PC-9 (cell line): ENCODE measurements at regions of chr3 and their contacts with region 1.

Region 1: GRCh38 chr3:112582244-112582874 is 20.5 kb downstream of the SLC35A5 start:
- DNase-seq: peak; percentile 47 to 55
- H3K4me3 ChIP-seq: no peak overlapping the region
- H3K27ac ChIP-seq: no peak overlapping the region
- H3K4me1 ChIP-seq: no peaks in the 10 kb centered on the region
- H3K27me3 ChIP-seq: no peaks in the 10 kb centered on the region
- CTCF ChIP-seq: peak; percentile 83

Region 2: GRCh38 chr3:112074006-112074405 is 508.4 kb before region 1 on chr3:
- CTCF ChIA-PET with region 1: no interaction called
- POLR2A ChIA-PET with region 1: no interaction called
- intact Hi-C with region 1: no loop called
- DNase-seq: peak in 1 of 2 experiments; percentile 63
- H3K4me3 ChIP-seq: peak overlapping the region; percentile 12; the same call in 1 of the 2 replicates
- H3K27ac ChIP-seq: peak overlapping the region; percentile 78
- H3K4me1 ChIP-seq: peaks cover 28% of the 10 kb centered on the region
- H3K27me3 ChIP-seq: no peaks in the 10 kb centered on the region
- CTCF ChIP-seq: no peak

Region 3: DNA sequence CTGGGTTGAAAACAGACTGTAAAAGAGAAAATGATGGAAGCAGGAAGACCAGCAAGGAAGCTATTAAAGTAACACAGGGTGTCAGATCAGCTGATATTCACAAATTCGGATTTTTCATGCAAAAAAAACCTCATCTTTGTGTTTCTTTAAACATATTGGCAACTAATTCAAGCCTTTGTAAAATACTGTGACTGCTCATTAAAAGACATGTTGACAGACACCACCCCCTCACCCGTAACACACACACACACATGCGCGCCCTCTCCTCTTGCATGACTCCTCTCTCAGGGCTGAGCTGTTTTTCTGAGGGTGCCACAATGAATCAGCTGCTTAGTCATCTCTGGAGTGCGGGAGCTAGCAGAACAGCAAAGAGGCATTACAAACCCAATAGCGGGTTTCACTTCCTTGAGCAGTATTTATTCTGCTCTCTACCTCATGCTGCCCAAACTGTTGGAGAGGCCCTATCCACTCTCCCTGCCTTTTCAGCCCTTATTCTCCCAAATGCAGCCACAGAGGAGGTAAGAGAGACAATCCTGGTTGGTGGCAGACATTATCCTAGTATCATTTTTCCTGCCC is 94.4 kb after region 1 on chr3:
- CTCF ChIA-PET with region 1: no interaction called
- POLR2A ChIA-PET with region 1: no interaction called
- intact Hi-C with region 1: loop called (anchors 1 kb)
- DNase-seq: peak; percentile 53 to 86
- H3K4me3 ChIP-seq: no peak overlapping the region
- H3K27ac ChIP-seq: peak overlapping the region; percentile 87
- H3K4me1 ChIP-seq: peaks cover 57% of the 10 kb centered on the region
- H3K27me3 ChIP-seq: no peaks in the 10 kb centered on the region
- CTCF ChIP-seq: no peak

Region 4: GRCh38 chr3:112734718-112735350 is 152.5 kb after region 1 on chr3:
- CTCF ChIA-PET with region 1: no interaction called
- POLR2A ChIA-PET with region 1: no interaction called
- intact Hi-C with region 1: loop called (anchors 1 kb)
- DNase-seq: peak; percentile 44 to 63
- H3K4me3 ChIP-seq: no peak overlapping the region
- H3K27ac ChIP-seq: no peak overlapping the region
- H3K4me1 ChIP-seq: peaks cover 58% of the 10 kb centered on the region
- H3K27me3 ChIP-seq: no peaks in the 10 kb centered on the region
- CTCF ChIP-seq: peak; percentile 86

Region 5: GRCh38 chr3:112990672-112991602 is 408.6 kb after region 1 on chr3 and contains the start of gene GTPBP8:
- CTCF ChIA-PET with region 1: no interaction called
- POLR2A ChIA-PET with region 1: no interaction called
- intact Hi-C with region 1: loop called (anchors 5 kb)
- DNase-seq: peak; percentile 87 to 90
- H3K4me3 ChIP-seq: peak within 1 kb of the TSS; percentile 95
- H3K27ac ChIP-seq: peak within 1 kb of the TSS; percentile 98
- H3K4me1 ChIP-seq: peaks cover 29% of the 10 kb centered on the region
- H3K27me3 ChIP-seq: no peaks in the 10 kb centered on the region
- CTCF ChIP-seq: peak; percentile 25; the same call in 1 of the 2 replicates
- total RNA-seq, gene GTPBP8: 27.9 and 34.3 TPM in 2 replicates

Region 6: DNA sequence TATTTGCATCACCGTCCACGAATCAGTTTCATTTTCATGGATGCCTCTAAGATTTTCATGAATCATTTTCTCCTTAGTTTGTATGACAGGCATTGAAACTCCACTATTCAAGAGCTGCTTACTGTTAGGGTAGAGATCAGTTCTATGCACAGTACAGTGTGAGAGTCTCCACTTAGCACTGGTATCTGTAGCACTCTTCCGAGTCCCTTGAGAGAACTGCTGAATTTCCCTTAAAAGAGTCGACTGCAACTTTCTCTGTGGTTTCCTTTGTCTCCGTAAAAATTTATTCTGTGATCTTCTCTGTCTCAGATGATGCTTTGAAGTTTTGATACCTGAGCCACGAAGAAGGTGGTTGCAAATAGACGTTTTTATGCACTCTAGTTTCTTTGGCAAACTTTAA is 423.3 kb after region 1 on chr3:
- CTCF ChIA-PET with region 1: no interaction called
- POLR2A ChIA-PET with region 1: interaction called, 13 read pairs
- intact Hi-C with region 1: no loop called
- DNase-seq: no peak
- H3K4me3 ChIP-seq: no peak overlapping the region
- H3K27ac ChIP-seq: no peak overlapping the region
- H3K4me1 ChIP-seq: no peaks in the 10 kb centered on the region
- H3K27me3 ChIP-seq: no peaks in the 10 kb centered on the region
- CTCF ChIP-seq: no peak

Region 7: DNA sequence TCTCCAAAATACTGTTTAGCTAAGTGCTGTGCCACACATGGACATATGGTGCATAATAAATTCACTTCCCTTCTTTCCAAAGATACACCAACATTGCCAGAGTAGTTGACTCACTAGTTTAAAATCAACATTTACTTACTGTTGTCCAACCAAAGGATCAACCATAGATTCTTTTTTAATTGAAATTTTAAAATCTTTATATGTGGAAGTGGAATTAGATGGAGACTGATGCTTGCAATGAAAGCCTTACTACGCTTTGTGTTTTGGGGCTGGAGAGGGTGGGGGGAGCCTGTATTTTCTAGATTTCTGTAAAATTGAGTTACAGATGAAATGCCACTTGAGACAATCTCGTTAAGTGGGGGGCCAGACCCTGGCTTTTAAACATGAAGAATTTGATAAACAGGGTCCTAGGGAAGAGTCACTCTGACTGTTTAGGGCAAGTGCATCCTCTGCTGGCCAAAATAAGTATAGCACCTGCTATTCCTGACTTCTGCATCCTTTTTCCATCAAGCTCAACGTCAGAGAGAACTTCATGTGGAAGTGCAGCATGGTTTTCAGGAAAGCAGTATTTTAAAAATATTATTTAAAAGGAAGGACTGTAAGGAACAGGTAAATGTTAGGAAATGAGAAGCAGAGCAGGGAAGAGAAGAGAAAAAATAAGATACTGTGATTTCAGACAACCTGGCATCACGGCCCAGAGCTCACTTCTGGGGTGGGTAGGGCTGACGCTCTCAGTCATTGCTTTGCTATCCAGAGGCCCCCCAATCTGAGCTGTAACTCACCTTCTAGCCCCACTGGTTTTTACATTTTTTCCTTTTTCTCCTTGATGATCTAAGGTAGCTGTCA is 705.7 kb after region 1 on chr3:
- CTCF ChIA-PET with region 1: no interaction called
- POLR2A ChIA-PET with region 1: no interaction called
- intact Hi-C with region 1: loop called (anchors 2 kb)
- DNase-seq: peak in 1 of 2 experiments; percentile 54
- H3K4me3 ChIP-seq: no peak overlapping the region
- H3K27ac ChIP-seq: peak overlapping the region; percentile 54
- H3K4me1 ChIP-seq: peaks cover 12% of the 10 kb centered on the region
- H3K27me3 ChIP-seq: no peaks in the 10 kb centered on the region
- CTCF ChIP-seq: peak; percentile 99

Region 8: GRCh38 chr3:113626503-113627371 is 1044.4 kb after region 1 on chr3:
- CTCF ChIA-PET with region 1: no interaction called
- POLR2A ChIA-PET with region 1: no interaction called
- intact Hi-C with region 1: loop called (anchors 2 kb)
- DNase-seq: peak; percentile 41
- H3K4me3 ChIP-seq: no peak overlapping the region
- H3K27ac ChIP-seq: no peak overlapping the region
- H3K4me1 ChIP-seq: 0 out of 2 replicates have a peak, but pooled peaks cover 4% of the 10 kb centered on the region
- H3K27me3 ChIP-seq: no peaks in the 10 kb centered on the region
- CTCF ChIP-seq: peak; percentile 86